ENCODE measurements at regions of chr1 and their contacts with region 1.

Region 1: DNA sequence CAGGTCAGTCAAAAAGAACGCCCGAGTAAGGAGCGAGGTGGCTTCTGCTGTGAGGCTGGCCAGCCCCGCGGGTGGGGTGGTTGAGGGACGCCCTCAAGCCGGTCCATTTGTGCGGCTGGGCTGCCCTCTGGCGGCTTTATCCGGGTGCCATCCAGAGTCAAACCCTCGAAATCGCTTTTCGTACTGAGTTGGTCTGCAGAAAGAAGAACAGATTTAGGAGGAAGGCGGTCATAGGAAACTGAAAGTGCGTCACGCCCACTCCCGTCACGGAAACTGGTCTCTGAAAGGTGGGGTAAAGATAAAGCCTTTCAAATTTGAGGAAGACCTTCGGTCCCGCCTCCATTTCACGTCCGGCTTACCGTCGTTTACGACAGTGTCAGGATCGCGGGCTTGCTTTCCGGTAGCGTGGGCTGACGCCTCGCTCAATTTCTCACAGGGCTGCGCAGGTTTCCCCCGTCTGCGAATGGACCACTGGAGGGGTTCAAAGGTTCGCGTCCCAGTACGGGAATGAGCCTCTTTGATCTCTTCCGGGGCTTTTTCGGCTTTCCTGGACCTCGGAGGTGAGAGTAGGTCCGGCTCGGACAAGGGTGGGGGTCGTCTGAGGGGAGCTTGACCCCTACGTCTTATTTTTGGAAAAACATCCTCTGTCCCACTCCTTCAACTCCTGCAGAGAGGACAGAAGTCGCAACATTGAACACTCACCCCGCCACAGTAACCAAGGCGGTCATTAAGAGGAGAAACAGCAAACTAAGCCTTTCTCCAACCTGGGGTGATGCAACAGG is at the start of gene HAX1:
- DNase-seq: peak; percentile 99
- ATAC-seq: peak; percentile 93
- H3K4me3 ChIP-seq: peak within 1 kb of the TSS; percentile 87
- H3K27ac ChIP-seq: peak within 1 kb of the TSS; percentile 37
- H3K4me1 ChIP-seq: peaks cover 5% of the 10 kb centered on the region
- H3K27me3 ChIP-seq: no peaks in the 10 kb centered on the region
- CTCF ChIP-seq: peak; percentile 97
- total RNA-seq, gene HAX1: 230 and 281 TPM in 2 replicates

Region 2: DNA sequence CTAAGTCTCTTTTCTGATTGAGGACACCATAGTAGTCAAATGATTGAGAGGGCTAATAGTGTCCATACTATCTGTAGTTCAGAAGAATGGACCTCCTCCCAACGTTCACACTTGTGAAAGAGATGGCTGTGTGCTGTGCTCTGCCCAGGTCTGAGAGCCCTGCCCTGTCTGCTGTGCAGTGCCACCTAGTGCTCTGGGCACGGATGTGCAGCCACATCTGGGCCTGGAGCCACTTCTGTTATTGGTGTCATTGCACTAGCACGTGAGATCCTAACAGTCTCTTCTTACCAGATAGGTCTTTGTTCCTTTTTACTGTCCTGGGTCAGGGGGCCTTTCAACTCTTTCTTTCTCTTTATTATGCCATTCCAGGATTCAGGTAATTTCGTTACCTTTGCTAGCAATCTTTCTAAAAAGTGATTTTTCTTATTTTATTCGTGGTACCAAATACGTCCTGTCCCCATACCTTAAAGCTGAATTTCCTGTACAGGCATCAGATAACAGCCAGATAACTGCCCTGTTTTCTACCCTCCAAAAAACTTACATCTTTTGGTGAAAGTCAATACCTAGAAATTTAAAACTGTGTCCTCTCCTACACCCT is 522.9 kb before region 1 on chr1:
- CTCF ChIA-PET with region 1: interaction called, 22 read pairs
- POLR2A ChIA-PET with region 1: no interaction called
- intact Hi-C with region 1: no loop called
- DNase-seq: peak; percentile 92
- ATAC-seq: peak; percentile 100
- H3K4me3 ChIP-seq: no peak overlapping the region
- H3K27ac ChIP-seq: no peak overlapping the region
- H3K4me1 ChIP-seq: no peaks in the 10 kb centered on the region
- H3K27me3 ChIP-seq: no peaks in the 10 kb centered on the region
- CTCF ChIP-seq: peak; percentile 99

Region 3: DNA sequence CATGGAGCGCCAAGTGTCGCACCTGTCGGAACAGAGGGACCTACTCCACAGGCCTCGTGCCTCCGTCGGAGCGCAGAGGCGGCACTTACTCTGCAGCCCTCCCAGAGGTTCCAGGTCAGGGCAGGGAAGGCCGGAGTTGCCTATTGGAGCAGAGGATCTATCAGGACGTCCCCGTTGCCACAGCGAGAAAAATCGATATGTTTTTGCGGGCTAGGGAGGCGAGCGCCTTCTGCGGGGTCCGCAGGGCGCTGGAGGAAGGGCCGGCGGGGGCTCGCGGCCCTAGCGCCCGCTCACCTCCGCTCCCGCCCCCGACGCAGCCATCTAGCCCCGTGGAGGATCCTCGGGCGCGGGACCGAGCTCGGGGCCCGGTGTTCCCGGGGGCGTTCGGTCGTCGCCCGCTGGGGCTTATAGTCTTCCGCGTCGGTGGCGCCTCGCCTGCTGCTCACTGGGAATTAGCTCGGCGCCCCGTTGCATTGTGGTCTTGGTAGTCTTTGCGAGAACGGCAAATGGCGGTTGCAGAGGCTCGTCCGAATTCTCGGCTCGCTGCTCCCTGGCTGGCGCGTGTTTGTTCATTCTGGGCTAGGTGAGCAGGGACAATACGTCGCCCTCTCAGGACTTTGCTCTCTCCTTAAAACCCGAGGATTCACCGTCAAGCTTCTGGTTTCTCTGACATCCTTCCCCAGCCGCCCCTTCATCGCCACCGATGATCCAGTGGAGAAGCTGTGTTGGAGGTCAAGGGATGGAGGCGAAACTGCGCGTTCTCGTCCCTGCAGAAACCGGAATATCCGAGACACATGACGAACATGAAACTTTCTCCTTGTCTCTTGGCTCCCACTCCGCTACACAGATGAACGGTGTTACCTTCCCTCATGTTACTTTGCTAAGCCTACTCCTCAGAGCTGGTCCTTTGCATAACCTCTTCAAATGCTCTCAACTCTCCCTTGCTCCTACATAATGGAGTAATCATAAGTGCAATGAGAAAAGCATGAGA is 294.9 kb before region 1 on chr1 and contains the start of gene JTB:
- CTCF ChIA-PET with region 1: interaction called, 10 read pairs
- POLR2A ChIA-PET with region 1: no interaction called
- intact Hi-C with region 1: no loop called
- DNase-seq: peak; percentile 89
- ATAC-seq: peak; percentile 91
- H3K4me3 ChIP-seq: peak within 1 kb of the TSS; percentile 79
- H3K27ac ChIP-seq: peak within 1 kb of the TSS; percentile 8
- H3K4me1 ChIP-seq: peaks cover 18% of the 10 kb centered on the region
- H3K27me3 ChIP-seq: no peaks in the 10 kb centered on the region
- CTCF ChIP-seq: no peak
- total RNA-seq, gene JTB: 377 and 388 TPM in 2 replicates

Region 4: GRCh38 chr1:154081386-154082126 is 190.9 kb before region 1 on chr1:
- CTCF ChIA-PET with region 1: no interaction called
- POLR2A ChIA-PET with region 1: no interaction called
- intact Hi-C with region 1: no loop called
- DNase-seq: no peak
- ATAC-seq: no peak
- H3K4me3 ChIP-seq: no peak overlapping the region
- H3K27ac ChIP-seq: no peak overlapping the region
- H3K4me1 ChIP-seq: no peaks in the 10 kb centered on the region
- H3K27me3 ChIP-seq: no peaks in the 10 kb centered on the region
- CTCF ChIP-seq: no peak

Region 5: GRCh38 chr1:154198756-154199562 is 73.4 kb before region 1 on chr1:
- CTCF ChIA-PET with region 1: interaction called, 16 read pairs
- POLR2A ChIA-PET with region 1: no interaction called
- intact Hi-C with region 1: loop called (anchors 1 kb)
- DNase-seq: peak; percentile 84
- ATAC-seq: peak; percentile 84
- H3K4me3 ChIP-seq: peak overlapping the region; percentile 29; the same call in 1 of the 2 replicates
- H3K27ac ChIP-seq: no peak overlapping the region
- H3K4me1 ChIP-seq: peaks cover 10% of the 10 kb centered on the region; the same call in 1 of the 2 replicates
- H3K27me3 ChIP-seq: peaks cover 5% of the 10 kb centered on the region; the same call in 1 of the 2 replicates
- CTCF ChIP-seq: peak; percentile 84

Region 6: GRCh38 chr1:154241703-154242351 is 30.6 kb before region 1 on chr1:
- CTCF ChIA-PET with region 1: no interaction called
- POLR2A ChIA-PET with region 1: no interaction called
- intact Hi-C with region 1: no loop called
- DNase-seq: no peak
- ATAC-seq: no peak
- H3K4me3 ChIP-seq: no peak overlapping the region
- H3K27ac ChIP-seq: no peak overlapping the region
- H3K4me1 ChIP-seq: no peaks in the 10 kb centered on the region
- H3K27me3 ChIP-seq: no peaks in the 10 kb centered on the region
- CTCF ChIP-seq: no peak

Region 7: DNA sequence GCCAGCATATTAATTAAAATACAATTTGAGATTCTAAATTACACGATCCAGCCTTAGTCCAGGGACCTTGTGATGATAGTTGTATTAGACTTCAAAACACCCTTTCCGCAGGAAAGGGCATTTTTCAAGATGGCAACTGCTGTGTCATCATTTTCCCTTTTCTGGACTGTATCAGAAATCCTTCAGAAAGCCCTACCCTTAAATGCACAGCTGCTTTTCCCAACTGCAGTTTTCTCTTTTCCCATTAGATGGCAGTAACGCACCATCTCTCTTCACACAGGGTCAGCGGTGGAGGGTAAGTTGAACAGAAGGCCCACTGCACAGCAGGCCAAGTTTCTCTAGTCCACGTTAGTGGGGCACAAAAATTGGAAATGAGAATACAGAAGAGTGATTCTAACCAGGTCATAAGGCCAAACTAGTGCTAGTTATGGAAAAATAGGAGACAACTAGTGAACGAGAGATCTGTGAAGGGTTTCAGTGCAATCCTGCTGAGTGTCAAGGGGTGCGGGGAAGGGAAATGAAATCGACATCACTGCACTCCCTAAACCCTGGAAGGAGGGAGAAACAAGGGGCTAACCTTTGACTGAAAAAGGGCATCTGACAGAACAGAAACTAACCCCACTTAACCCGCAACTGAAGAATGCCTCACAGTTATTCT is 207.5 kb after region 1 on chr1:
- CTCF ChIA-PET with region 1: no interaction called
- POLR2A ChIA-PET with region 1: no interaction called
- intact Hi-C with region 1: loop called (anchors 5 kb)
- DNase-seq: peak; percentile 98
- ATAC-seq: peak; percentile 85
- H3K4me3 ChIP-seq: no peak overlapping the region
- H3K27ac ChIP-seq: no peak overlapping the region
- H3K4me1 ChIP-seq: peaks cover 33% of the 10 kb centered on the region
- H3K27me3 ChIP-seq: no peaks in the 10 kb centered on the region
- CTCF ChIP-seq: peak; percentile 99